ENCODE measurements at regions of chr1 and their contacts with region 1.

Region 1: DNA sequence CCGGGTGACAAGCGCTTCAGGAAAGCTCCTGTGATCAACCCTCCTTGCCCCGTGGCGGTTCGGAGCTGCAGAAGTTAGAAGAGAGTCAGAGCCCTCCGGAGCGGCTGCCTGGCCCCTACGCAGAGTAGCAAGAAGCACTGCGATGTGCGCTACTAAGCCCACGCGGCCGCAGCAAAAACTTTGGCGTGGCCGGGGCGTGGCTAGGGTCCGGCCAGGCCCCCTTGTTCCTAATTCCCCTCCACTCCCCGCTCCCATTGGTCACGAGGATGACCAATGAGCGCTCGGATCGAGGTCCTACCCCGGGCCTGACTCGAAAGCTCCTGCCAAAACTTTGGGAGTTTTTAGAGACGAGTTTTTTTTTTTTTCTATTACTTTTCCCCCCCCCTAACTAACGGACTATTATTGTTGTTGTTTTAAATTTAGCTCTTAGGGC is at the start of gene HLX:
- DNase-seq: peak; percentile 69 to 95
- H3K4me3 ChIP-seq: peak within 1 kb of the TSS; percentile 62 to 89 (median 82)
- H3K27ac ChIP-seq: peak within 1 kb of the TSS; percentile 74 to 95 (median 92)
- H3K4me1 ChIP-seq: peaks cover 13 to 63% (median 48%) of the 10 kb centered on the region in 4 donors
- H3K27me3 ChIP-seq: peaks cover 4 to 85% (median 41%) of the 10 kb centered on the region in 3 donors
- CTCF ChIP-seq: no peak
- EP300 ChIP-seq: no peak
- POLR2A ChIP-seq: no peak
- total RNA-seq, gene HLX: 0.43 to 38.5 (median 6.1) TPM

Region 2: GRCh38 chr1:221203224-221204054 is 324.3 kb after region 1 on chr1:
- intact Hi-C with region 1: loop called (anchors 10 kb)
- DNase-seq: peak; percentile 69 to 87
- H3K4me3 ChIP-seq: no peak overlapping the region
- H3K27ac ChIP-seq: peak overlapping the region in 2 of 5 donors; percentile 2 to 38
- H3K4me1 ChIP-seq: peaks cover 0 to 15% (median 5%) of the 10 kb centered on the region in 4 donors
- H3K27me3 ChIP-seq: peaks cover 0 to 4% (median 0%) of the 10 kb centered on the region in 3 donors
- CTCF ChIP-seq: peak in 5 of 7 experiments; percentile 8 to 80 (median 69)
- EP300 ChIP-seq: no peak
- POLR2A ChIP-seq: no peak

Region 3: GRCh38 chr1:221435504-221435904 is 556.4 kb after region 1 on chr1:
- intact Hi-C with region 1: loop called (anchors 10 kb)
- DNase-seq: peak in 1 of 2 donors; percentile 73
- H3K4me3 ChIP-seq: no peak overlapping the region
- H3K27ac ChIP-seq: no peak overlapping the region
- H3K4me1 ChIP-seq: peaks cover 0 to 13% (median 6%) of the 10 kb centered on the region in 4 donors
- H3K27me3 ChIP-seq: no peaks in the 10 kb centered on the region
- CTCF ChIP-seq: peak in 6 of 7 experiments; percentile 39 to 96 (median 90)
- EP300 ChIP-seq: no peak
- POLR2A ChIP-seq: no peak

Measured in stomach (tissue), 19 donors.